Activated CD4-positive, alpha-beta T cell treated with anti-CD3 and anti-CD28 coated beads for 36 hours (primary cell): ENCODE measurements at regions of chr5 and their contacts with region 1.

Region 1: GRCh38 chr5:146516151-146516475 is at the start of gene GPR151:
- DNase-seq: no peak
- ATAC-seq: no peak
- H3K4me3 Mint-ChIP-seq: no peak within 1 kb of the TSS
- H3K27ac Mint-ChIP-seq: no peak within 1 kb of the TSS
- H3K4me1 Mint-ChIP-seq: no peaks in the 10 kb centered on the region
- H3K27me3 Mint-ChIP-seq: peaks cover 2% of the 10 kb centered on the region
- total RNA-seq, gene GPR151: not detected

Region 2: DNA sequence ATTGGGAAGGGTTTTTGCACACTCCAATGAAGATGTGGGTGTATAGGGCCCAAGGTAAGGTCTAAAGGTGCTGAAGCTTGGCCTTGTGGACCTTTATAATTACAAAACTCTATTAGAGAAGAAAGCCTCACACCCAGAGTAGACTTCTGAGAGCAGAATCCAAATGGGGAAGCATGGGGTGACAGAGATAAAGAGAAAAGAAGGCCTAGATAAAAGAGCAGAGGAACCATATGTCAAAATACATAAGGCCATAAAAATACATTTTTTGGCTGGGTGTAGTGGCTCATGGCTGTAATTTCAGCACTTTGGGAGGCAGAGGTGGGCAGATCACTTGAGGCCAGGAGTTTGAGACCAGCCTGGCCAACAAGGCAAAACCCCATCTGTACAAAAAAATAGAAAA is 96.4 kb before region 1 on chr5:
- CTCF ChIA-PET with region 1: no interaction called
- POLR2A ChIA-PET with region 1: no interaction called
- intact Hi-C with region 1: no loop called
- DNase-seq: no peak
- ATAC-seq: no peak
- H3K4me3 Mint-ChIP-seq: no peak overlapping the region
- H3K27ac Mint-ChIP-seq: no peak overlapping the region
- H3K4me1 Mint-ChIP-seq: no peaks in the 10 kb centered on the region
- H3K27me3 Mint-ChIP-seq: peaks cover 6% of the 10 kb centered on the region

Region 3: GRCh38 chr5:146533260-146533857 is 17.2 kb after region 1 on chr5:
- CTCF ChIA-PET with region 1: interaction called, 19 read pairs
- POLR2A ChIA-PET with region 1: no interaction called
- intact Hi-C with region 1: no loop called
- DNase-seq: peak; percentile 88
- ATAC-seq: peak; percentile 98
- H3K4me3 Mint-ChIP-seq: no peak overlapping the region
- H3K27ac Mint-ChIP-seq: no peak overlapping the region
- H3K4me1 Mint-ChIP-seq: peaks cover 3% of the 10 kb centered on the region
- H3K27me3 Mint-ChIP-seq: no peaks in the 10 kb centered on the region